CD4-positive, alpha-beta T cell (primary cell): ENCODE measurements at regions of chrX and their contacts with region 1.

Region 1: GRCh38 chrX:19585332-19586082 is 70.2 kb upstream of the MAP3K15 start:
- DNase-seq: no peak
- ATAC-seq: no peak
- H3K4me3 ChIP-seq: no peak overlapping the region
- H3K4me3 Mint-ChIP-seq: no peak overlapping the region
- H3K27ac ChIP-seq: no peak overlapping the region
- H3K27ac Mint-ChIP-seq: no peak overlapping the region
- H3K4me1 ChIP-seq: no peaks in the 10 kb centered on the region
- H3K4me1 Mint-ChIP-seq: no peaks in the 10 kb centered on the region
- H3K27me3 ChIP-seq: no peaks in the 10 kb centered on the region
- H3K27me3 Mint-ChIP-seq: no peaks in the 10 kb centered on the region
- CTCF ChIP-seq: no peak

Region 2: DNA sequence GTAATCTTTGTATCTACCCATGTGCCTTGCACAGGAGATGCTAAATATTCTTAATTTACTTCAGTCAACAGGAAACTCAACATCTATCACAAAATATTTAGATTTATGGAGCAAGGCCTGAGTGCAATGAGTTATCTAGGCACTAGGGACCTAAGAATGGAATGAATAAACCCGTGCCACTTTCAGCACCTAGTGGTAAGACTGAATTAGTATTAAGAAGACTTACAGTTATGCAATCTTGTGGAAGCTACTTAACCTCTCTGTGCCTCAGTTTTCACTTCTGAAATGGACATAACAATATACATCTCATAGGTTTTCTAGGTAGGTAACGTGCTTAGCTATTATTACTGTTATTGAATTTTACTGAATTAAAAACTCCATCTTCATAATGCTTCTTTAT is 74.4 kb after region 1 on chrX:
- CTCF ChIA-PET with region 1: no interaction called
- POLR2A ChIA-PET with region 1: no interaction called
- intact Hi-C with region 1: loop called in 1 of 2 experiments (anchors 10 kb)
- DNase-seq: no peak
- ATAC-seq: no peak
- H3K4me3 ChIP-seq: no peak overlapping the region
- H3K4me3 Mint-ChIP-seq: no peak overlapping the region
- H3K27ac ChIP-seq: no peak overlapping the region
- H3K27ac Mint-ChIP-seq: peak overlapping the region; percentile 43
- H3K4me1 ChIP-seq: no peaks in the 10 kb centered on the region
- H3K4me1 Mint-ChIP-seq: peaks cover 54% of the 10 kb centered on the region
- H3K27me3 ChIP-seq: no peaks in the 10 kb centered on the region
- H3K27me3 Mint-ChIP-seq: no peaks in the 10 kb centered on the region
- CTCF ChIP-seq: no peak

Region 3: GRCh38 chrX:19673375-19674040 is 88.0 kb after region 1 on chrX:
- CTCF ChIA-PET with region 1: no interaction called
- POLR2A ChIA-PET with region 1: no interaction called
- intact Hi-C with region 1: no loop called
- DNase-seq: no peak
- ATAC-seq: no peak
- H3K4me3 ChIP-seq: no peak overlapping the region
- H3K4me3 Mint-ChIP-seq: peak overlapping the region; percentile 44
- H3K27ac ChIP-seq: no peak overlapping the region
- H3K27ac Mint-ChIP-seq: peak overlapping the region; percentile 70
- H3K4me1 ChIP-seq: peaks cover 19% of the 10 kb centered on the region
- H3K4me1 Mint-ChIP-seq: peaks cover 56% of the 10 kb centered on the region
- H3K27me3 ChIP-seq: no peaks in the 10 kb centered on the region
- H3K27me3 Mint-ChIP-seq: no peaks in the 10 kb centered on the region
- CTCF ChIP-seq: no peak

Region 4: GRCh38 chrX:20969002-20969401 is 1383.5 kb after region 1 on chrX:
- CTCF ChIA-PET with region 1: no interaction called
- POLR2A ChIA-PET with region 1: no interaction called
- intact Hi-C with region 1: no loop called
- DNase-seq: no peak
- ATAC-seq: no peak
- H3K4me3 ChIP-seq: no peak overlapping the region
- H3K4me3 Mint-ChIP-seq: no peak overlapping the region
- H3K27ac ChIP-seq: no peak overlapping the region
- H3K27ac Mint-ChIP-seq: no peak overlapping the region
- H3K4me1 ChIP-seq: no peaks in the 10 kb centered on the region
- H3K4me1 Mint-ChIP-seq: no peaks in the 10 kb centered on the region
- H3K27me3 ChIP-seq: no peaks in the 10 kb centered on the region
- H3K27me3 Mint-ChIP-seq: no peaks in the 10 kb centered on the region
- CTCF ChIP-seq: no peak